Dorsolateral prefrontal cortex (tissue), 120 donors: ENCODE measurements at regions of chr1 and their contacts with region 1.

Region 1: DNA sequence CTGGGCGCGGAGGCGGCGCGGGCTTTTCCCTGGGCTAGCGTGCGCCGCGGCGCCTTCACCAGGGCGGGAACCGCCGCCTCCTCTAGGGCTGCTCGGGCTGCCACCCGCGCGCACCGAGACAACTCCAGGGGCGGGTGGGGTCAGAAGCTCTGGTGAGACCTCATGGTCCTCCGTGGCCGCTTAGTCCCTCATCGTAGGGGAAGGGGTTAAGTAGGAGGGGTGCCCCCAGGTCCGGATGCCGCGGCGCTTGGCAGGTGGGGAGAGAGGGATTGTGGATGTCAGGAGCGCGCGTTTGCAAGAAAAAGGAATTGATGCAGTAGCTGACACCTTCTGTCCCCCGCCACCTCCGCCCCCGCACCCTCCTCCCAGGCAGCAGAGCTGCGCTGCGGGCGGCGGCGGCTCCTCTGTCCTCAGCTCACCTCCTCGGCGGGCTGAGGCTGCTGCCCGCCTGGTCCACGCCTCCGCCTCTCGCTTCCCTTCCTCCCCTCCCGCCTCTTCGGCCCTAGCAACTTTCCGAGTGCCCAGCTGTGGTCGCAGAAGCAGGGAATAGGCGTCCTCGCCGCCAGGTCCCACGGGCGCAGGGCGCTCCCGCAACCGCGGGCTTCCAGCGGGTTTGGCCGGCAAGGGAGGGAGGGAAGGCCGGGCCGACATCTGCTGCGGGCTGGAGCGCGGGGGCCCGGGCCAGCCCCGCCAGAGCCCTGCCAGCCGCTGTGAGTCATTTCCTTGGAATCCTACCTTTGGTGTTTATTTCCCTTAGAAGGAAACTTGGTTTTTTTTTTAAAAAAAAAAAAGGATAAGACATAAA is 822 bp downstream of the SERTAD4 start:
- DNase-seq: peak in 9 of 10 donors; percentile 17 to 70 (median 51)
- H3K4me3 ChIP-seq: peak overlapping the region; percentile 53 to 90 (median 75)
- H3K27ac ChIP-seq: peak overlapping the region; percentile 13 to 95 (median 86)
- H3K27me3 ChIP-seq: no peaks in the 10 kb centered on the region
- CTCF ChIP-seq: peak in 1 of 56 donors; percentile 8

Region 2: GRCh38 chr1:209875515-209875914 is 357.9 kb before region 1 on chr1:
- intact Hi-C with region 1: loop called in 1 of 2 experiments (anchors 10 kb)
- DNase-seq: peak in 1 of 10 donors; percentile 54
- H3K4me3 ChIP-seq: peak overlapping the region in 20 of 59 donors; percentile 4 to 42 (median 18)
- H3K27ac ChIP-seq: peak overlapping the region in 50 of 59 donors; percentile 1 to 99 (median 68)
- H3K27me3 ChIP-seq: no peaks in the 10 kb centered on the region
- CTCF ChIP-seq: peak in 45 of 56 donors; percentile 10 to 61 (median 32)

Region 3: GRCh38 chr1:210143465-210144062 is 89.9 kb before region 1 on chr1:
- intact Hi-C with region 1: loop called in 1 of 2 experiments (anchors 10 kb)
- DNase-seq: peak; percentile 44 to 89 (median 61)
- H3K4me3 ChIP-seq: no peak overlapping the region
- H3K27ac ChIP-seq: no peak overlapping the region
- H3K27me3 ChIP-seq: no peaks in the 10 kb centered on the region
- CTCF ChIP-seq: peak; percentile 64 to 91 (median 78)

Region 4: GRCh38 chr1:210250998-210251679 is 17.7 kb after region 1 on chr1:
- intact Hi-C with region 1: loop called (anchors 1 to 2 kb)
- DNase-seq: peak; percentile 55 to 89 (median 82)
- H3K4me3 ChIP-seq: peak overlapping the region; percentile 36 to 77 (median 65)
- H3K27ac ChIP-seq: peak overlapping the region; percentile 66 to 95 (median 88)
- H3K27me3 ChIP-seq: no peaks in the 10 kb centered on the region
- CTCF ChIP-seq: peak in 17 of 56 donors; percentile 6 to 39 (median 22)

Region 5: GRCh38 chr1:210394281-210394821 is 160.9 kb after region 1 on chr1:
- intact Hi-C with region 1: loop called in 1 of 2 experiments (anchors 10 kb)
- DNase-seq: no peak
- H3K4me3 ChIP-seq: no peak overlapping the region
- H3K27ac ChIP-seq: peak overlapping the region in 58 of 59 donors; percentile 66 to 96 (median 89)
- H3K27me3 ChIP-seq: no peaks in the 10 kb centered on the region
- CTCF ChIP-seq: no peak

Region 6: DNA sequence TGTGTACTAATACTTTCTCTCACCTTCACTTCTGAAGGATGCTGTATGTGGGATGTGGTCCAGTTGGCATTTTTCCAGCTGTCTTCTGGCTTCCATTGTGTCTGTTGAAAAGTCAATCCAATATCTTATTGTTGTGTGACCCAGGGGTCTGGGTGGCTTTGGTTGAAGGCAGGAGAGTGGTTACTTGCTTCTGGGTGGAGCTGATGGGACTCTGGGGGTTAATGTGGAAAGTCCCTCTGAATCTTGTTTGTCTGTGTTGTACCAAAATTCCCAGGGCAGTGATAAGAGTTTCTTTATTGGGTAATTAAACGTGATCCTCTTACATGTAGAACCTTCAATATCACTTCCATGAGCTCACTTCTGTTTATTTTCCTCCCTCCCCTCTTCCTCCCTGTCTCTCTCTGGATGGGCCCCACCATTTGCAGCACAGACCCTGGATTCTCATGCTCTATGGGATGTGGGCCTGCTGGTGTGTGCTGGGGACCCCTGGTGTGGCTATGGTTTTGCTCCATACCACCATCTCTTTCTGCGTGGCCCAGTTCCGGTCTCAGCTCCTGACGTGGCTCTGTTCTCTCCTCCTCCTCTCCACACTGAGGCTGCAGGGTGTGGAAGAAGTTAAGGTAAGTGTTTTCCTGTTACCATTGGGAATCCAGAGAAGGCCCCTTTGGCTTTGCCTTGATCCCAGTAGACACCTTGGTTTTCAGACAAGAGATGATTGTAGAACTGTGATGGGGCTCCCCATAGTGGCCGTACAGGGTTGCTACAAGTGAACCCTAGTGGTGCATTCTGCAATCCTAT is 166.8 kb after region 1 on chr1:
- intact Hi-C with region 1: loop called (anchors 10 kb)
- DNase-seq: peak; percentile 28 to 84 (median 62)
- H3K4me3 ChIP-seq: no peak overlapping the region
- H3K27ac ChIP-seq: peak overlapping the region in 1 of 59 donors; percentile 31
- H3K27me3 ChIP-seq: no peaks in the 10 kb centered on the region
- CTCF ChIP-seq: peak in 55 of 56 donors; percentile 44 to 98 (median 89)